ENCODE measurements at regions of chr4 and their contacts with region 1.

Region 1: DNA sequence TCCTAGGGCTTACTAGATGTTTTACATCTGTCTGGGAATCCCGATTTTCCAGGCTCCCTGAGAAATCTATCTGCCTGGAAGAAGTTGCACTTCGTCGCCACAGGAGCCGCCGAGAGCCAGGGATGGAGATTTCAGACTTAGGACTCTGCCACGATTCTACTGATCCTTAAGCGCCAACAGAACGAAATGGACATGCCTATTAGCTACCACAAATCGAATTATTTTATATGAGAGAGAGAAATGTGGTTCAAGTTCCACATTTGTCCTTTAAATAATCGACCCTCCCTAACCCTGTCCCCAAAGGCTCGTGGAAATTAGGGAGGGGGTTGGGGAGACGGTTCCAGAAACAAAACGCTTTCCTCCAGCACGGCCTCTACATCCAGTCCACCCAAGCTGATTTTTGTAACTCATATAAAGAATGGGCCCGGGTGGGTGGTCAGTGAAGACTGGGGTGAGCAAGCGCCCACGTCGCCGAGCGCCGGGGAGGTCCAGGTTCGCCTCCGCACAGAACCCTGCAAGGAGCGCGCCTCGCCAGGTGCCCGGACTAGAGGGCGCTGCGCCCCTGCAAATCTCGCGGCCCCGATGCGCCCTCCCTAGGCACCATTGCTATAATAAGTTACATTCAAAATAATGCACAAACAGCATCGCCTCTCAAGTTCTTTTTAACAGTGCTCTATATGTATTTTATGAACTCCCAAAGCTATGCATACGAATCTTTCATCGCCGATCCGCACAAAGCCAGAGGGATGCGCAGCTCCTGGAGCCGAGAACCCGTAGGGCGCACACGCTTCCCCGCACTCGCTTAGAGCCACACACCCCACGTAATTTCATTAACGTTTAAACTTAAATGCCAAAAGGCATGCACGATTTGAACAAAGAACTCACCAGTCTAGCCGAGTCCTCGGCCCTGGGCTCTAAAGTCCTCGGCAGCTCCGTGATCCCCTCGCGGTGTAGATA is 2.1 kb upstream of the FAT1 start:
- DNase-seq: peak; percentile 77
- H3K4me3 ChIP-seq: peak overlapping the region; percentile 92 to 100 (median 99)
- H3K27ac ChIP-seq: peak overlapping the region; percentile 99
- H3K4me1 ChIP-seq: peaks cover 30% of the 10 kb centered on the region
- H3K27me3 ChIP-seq: no peaks in the 10 kb centered on the region
- CTCF ChIP-seq: peak; percentile 52 to 90

Region 2: DNA sequence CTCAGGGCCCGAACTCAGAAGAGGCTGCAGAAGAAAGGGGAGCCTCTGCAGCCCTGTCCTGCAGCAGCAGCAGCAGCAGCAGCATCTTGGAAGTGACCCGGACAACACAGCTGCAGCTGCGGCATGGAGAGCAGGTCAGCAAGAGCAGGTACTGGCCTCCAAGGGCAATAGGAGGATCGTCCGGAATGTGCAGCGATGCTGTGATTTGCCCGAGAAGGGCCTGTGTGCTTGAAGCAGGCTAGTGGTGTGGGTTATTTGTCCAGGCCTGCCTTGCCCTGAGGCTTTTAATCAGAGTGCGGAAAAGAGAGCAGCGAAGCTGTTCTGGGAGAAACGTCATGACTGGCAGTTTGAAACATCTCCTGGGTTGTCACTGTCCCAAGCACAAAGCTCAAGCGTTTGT is 333.7 kb before region 1 on chr4:
- CTCF ChIA-PET with region 1: no interaction called
- dilution Hi-C with region 1: no loop called
- in situ Hi-C with region 1: no loop called
- intact Hi-C with region 1: no loop called
- DNase-seq: peak; percentile 31
- H3K4me3 ChIP-seq: no peak overlapping the region
- H3K27ac ChIP-seq: no peak overlapping the region
- H3K4me1 ChIP-seq: no peaks in the 10 kb centered on the region
- H3K27me3 ChIP-seq: no peaks in the 10 kb centered on the region
- CTCF ChIP-seq: no peak

Region 3: GRCh38 chr4:186621959-186622553 is 103.7 kb before region 1 on chr4:
- CTCF ChIA-PET with region 1: no interaction called
- dilution Hi-C with region 1: no loop called
- in situ Hi-C with region 1: no loop called
- intact Hi-C with region 1: no loop called
- DNase-seq: peak; percentile 79
- H3K4me3 ChIP-seq: no peak overlapping the region
- H3K27ac ChIP-seq: no peak overlapping the region
- H3K4me1 ChIP-seq: peaks cover 16% of the 10 kb centered on the region
- H3K27me3 ChIP-seq: no peaks in the 10 kb centered on the region
- CTCF ChIP-seq: peak in 1 of 2 donors; percentile 17

Region 4: DNA sequence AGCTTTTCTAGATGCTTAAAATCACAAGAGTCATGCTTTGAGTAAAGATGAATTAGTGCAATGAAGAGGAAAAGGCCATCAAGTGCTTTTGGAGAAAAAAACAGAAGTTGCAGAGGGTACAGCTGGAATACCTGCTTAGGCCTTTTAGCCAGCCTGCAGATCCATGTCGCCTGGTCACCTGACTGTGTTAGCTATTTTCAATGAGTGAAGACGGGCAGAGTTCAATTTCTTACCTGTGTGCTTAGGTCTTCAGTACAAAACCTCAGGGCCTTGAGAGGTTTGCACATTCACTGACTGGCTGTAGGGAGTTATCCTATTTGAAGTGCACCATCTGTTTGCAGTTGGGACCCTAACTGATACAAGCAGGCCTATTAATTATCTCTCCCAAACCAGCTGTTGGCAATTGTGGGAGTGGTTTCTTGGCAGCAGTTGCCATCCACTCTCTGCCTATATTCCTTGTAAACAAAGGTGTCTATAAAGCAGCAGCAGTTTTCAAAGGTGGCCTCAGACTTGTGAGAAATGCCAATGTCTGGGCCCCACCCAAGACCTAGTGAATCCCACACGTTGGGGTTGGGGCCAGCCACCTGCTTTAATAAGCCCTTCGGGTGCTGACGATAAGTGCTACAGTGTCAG is 14.2 kb after region 1 on chr4:
- CTCF ChIA-PET with region 1: no interaction called
- dilution Hi-C with region 1: no loop called
- in situ Hi-C with region 1: no loop called
- intact Hi-C with region 1: no loop called
- DNase-seq: no peak
- H3K4me3 ChIP-seq: no peak overlapping the region
- H3K27ac ChIP-seq: no peak overlapping the region
- H3K4me1 ChIP-seq: peaks cover 17% of the 10 kb centered on the region
- H3K27me3 ChIP-seq: no peaks in the 10 kb centered on the region
- CTCF ChIP-seq: no peak

Region 5: GRCh38 chr4:186765138-186765537 is 39.4 kb after region 1 on chr4:
- CTCF ChIA-PET with region 1: no interaction called
- dilution Hi-C with region 1: no loop called
- in situ Hi-C with region 1: no loop called
- intact Hi-C with region 1: loop called (anchors 1 kb)
- DNase-seq: peak; percentile 95
- H3K4me3 ChIP-seq: peak overlapping the region in 2 of 3 experiments; percentile 6 to 25
- H3K27ac ChIP-seq: peak overlapping the region; percentile 91
- H3K4me1 ChIP-seq: peaks cover 28% of the 10 kb centered on the region
- H3K27me3 ChIP-seq: no peaks in the 10 kb centered on the region
- CTCF ChIP-seq: no peak

Region 6: DNA sequence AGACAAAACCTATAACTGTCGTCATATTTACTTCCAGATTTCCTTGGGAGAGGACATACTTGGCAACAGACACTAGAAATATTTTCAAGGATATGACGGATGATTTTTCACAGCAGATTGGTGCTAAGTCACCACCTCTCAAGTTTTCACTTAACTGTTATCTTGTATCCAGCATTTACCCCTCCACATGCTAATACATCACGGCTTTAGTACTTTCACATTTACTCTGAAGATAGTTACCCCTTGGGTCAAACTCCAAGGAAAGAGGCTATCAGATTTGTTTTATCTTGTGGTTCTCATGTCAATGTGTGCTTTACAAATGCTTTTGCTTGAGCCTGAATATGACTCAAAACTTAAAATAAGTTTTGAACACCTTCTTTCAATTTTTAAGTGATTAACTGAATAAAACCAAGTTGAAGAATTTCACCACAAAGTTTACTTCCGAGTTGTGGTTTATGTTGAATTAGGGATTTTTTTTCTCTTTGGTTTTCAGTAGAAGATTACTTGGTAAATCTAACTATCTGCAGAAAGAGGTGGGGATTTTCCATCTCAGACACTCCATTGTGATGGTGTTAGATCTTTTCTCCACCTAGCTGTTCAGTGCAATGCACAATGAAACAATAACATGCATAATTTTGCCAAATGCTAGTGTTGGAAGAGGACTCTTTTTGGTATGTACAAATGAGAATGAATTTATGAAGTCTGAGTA is 73.4 kb after region 1 on chr4:
- CTCF ChIA-PET with region 1: no interaction called
- dilution Hi-C with region 1: no loop called
- in situ Hi-C with region 1: no loop called
- intact Hi-C with region 1: no loop called
- DNase-seq: no peak
- H3K4me3 ChIP-seq: no peak overlapping the region
- H3K27ac ChIP-seq: no peak overlapping the region
- H3K4me1 ChIP-seq: no peaks in the 10 kb centered on the region
- H3K27me3 ChIP-seq: no peaks in the 10 kb centered on the region
- CTCF ChIP-seq: no peak

Region 7: DNA sequence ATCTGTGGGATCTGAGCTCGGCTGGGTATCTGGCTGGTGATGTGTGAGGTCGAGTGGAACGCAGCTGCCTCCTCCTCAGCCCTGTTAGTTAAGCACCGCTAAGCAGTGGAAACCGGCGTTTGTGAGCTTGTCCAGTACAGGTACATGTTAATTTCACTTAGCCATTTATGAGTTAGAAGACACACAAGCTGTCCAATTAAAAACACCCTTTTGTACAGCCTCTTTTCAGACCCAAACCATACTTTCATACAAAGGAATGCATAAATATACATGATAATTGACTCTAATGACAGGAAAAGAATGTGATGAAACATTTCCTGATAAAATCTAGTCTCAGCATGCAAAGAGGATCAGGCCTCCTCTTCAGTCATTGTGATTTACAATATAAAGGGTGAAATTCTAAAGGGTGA is 161.5 kb after region 1 on chr4:
- CTCF ChIA-PET with region 1: interaction called, 6 read pairs
- dilution Hi-C with region 1: no loop called
- in situ Hi-C with region 1: no loop called
- intact Hi-C with region 1: loop called (anchors 1 kb)
- DNase-seq: peak; percentile 71
- H3K4me3 ChIP-seq: peak overlapping the region in 1 of 3 experiments; percentile 10
- H3K27ac ChIP-seq: peak overlapping the region; percentile 62
- H3K4me1 ChIP-seq: peaks cover 25% of the 10 kb centered on the region
- H3K27me3 ChIP-seq: no peaks in the 10 kb centered on the region
- CTCF ChIP-seq: no peak

Region 8: GRCh38 chr4:187006189-187006618 is 280.5 kb after region 1 on chr4:
- CTCF ChIA-PET with region 1: no interaction called
- dilution Hi-C with region 1: no loop called
- in situ Hi-C with region 1: no loop called
- intact Hi-C with region 1: loop called (anchors 1 kb)
- DNase-seq: peak; percentile 66
- H3K4me3 ChIP-seq: peak overlapping the region in 1 of 3 experiments; percentile 11
- H3K27ac ChIP-seq: peak overlapping the region; percentile 50
- H3K4me1 ChIP-seq: peaks cover 13% of the 10 kb centered on the region
- H3K27me3 ChIP-seq: no peaks in the 10 kb centered on the region
- CTCF ChIP-seq: no peak

Region 9: GRCh38 chr4:187236209-187236890 is 510.6 kb after region 1 on chr4:
- CTCF ChIA-PET with region 1: no interaction called
- dilution Hi-C with region 1: no loop called
- in situ Hi-C with region 1: no loop called
- intact Hi-C with region 1: loop called (anchors 2 kb)
- DNase-seq: peak; percentile 39
- H3K4me3 ChIP-seq: no peak overlapping the region
- H3K27ac ChIP-seq: no peak overlapping the region
- H3K4me1 ChIP-seq: peaks cover 17% of the 10 kb centered on the region
- H3K27me3 ChIP-seq: no peaks in the 10 kb centered on the region
- CTCF ChIP-seq: no peak

Region 10: DNA sequence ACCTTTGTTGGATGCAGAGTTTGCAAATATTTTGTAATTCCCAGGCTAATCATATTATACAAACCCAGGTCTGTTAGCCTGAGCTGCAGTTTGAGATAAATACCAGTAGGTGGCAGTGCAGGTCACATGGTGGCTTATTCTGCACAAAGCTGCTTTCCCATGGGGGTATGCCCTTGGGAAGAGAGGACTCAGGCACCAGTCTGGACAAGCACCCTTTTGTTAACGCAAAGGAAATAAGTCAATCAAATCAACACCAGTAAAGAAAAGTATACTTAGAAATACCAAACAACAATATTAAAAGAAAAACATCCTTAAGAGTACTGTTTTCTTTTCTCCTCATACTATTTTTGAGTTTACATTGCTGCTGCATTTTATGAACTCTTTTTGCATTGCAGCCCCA is 880.8 kb after region 1 on chr4:
- CTCF ChIA-PET with region 1: no interaction called
- dilution Hi-C with region 1: no loop called
- in situ Hi-C with region 1: no loop called
- intact Hi-C with region 1: loop called (anchors 1 kb)
- DNase-seq: peak; percentile 57
- H3K4me3 ChIP-seq: no peak overlapping the region
- H3K27ac ChIP-seq: no peak overlapping the region
- H3K4me1 ChIP-seq: peaks cover 16% of the 10 kb centered on the region
- H3K27me3 ChIP-seq: no peaks in the 10 kb centered on the region
- CTCF ChIP-seq: peak; percentile 87 to 89

Measured in mammary epithelial cell (primary cell).